Mammary epithelial cell (primary cell): ENCODE measurements at regions of chr11 and their contacts with region 1.

Region 1: DNA sequence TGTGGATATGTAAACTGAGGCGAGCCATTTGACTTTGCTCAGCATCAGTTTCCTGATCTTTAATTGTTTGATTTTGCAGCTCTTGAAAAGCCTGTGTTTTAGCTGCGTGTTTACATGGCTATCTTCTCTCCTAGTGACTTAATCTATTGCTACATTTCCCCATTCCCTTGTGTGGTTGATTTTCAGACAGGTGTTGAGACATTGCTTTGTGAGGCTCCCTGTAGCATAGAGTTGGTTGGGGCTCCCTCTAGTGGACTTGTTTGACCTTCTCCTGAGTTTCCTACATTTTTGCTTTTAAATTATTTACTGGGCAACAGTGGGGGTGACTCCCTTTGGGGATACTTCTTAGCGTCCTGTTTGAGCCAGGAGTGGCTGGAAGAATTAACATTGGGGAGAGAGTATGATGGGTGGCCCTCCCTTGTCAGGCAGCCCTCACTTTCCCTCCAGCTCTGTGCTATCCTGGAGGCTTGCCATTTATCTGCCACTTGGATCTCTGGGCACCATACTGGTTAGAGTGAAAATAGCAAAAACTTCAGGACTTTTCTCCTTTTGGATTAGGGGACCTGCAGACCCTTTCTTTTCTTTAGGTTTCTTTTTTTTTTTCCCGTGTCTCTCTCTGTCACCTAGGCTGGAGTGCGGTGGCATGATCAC is 9.2 kb upstream of the CBL start:
- DNase-seq: peak; percentile 80
- H3K4me3 ChIP-seq: no peak overlapping the region
- H3K27ac ChIP-seq: no peak overlapping the region
- H3K4me1 ChIP-seq: no peaks in the 10 kb centered on the region
- H3K27me3 ChIP-seq: no peaks in the 10 kb centered on the region
- CTCF ChIP-seq: peak; percentile 72 to 74

Region 2: GRCh38 chr11:119065369-119065768 is 131.6 kb before region 1 on chr11:
- CTCF ChIA-PET with region 1: interaction called, 3 read pairs
- dilution Hi-C with region 1: no loop called
- in situ Hi-C with region 1: no loop called
- intact Hi-C with region 1: loop called (anchors 1 kb)
- DNase-seq: no peak
- H3K4me3 ChIP-seq: no peak overlapping the region
- H3K27ac ChIP-seq: no peak overlapping the region
- H3K4me1 ChIP-seq: peaks cover 10% of the 10 kb centered on the region
- H3K27me3 ChIP-seq: no peaks in the 10 kb centered on the region
- CTCF ChIP-seq: peak; percentile 56 to 61

Region 3: DNA sequence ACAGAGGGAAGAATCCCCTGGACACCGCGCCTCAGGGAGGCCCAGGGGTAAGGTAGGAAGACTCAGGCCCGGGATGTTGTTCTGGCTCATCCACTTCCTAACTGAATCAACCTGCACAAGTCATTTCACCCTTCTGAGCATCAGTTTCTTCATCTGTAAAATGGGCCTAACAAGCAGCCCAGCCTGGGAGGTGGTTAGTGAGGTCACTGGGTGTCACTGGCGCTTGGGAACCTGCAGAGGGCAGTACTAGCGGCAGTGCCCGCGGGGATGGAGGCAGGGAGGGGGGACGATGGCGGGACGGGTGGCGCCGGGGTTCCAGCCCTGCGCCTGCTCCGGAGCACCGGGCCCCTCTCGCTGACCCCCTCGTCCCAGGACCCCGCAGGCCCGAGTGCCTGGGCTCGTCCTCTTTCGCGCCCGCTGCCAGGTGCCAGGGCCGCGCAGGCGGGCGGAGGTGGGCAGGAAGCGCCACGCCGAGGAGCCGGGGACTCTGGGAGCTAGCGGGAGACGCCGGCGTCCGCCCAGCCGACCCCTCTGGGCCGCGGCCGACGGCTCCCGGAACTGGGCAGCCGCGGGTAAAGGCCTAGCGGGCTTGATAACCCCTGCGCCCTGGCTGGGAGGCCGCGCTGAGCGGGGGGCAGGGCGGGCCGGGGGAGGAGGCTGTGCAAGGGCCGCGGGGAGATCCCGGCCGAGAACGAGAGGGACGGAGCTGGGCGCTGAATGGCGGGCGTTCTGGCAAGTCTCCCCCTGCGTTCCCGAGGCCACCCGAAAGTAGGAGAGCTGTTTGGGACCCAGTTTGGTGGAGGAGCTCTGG is 28.3 kb before region 1 on chr11 and contains the start of gene NLRX1:
- CTCF ChIA-PET with region 1: interaction called, 3 read pairs
- dilution Hi-C with region 1: no loop called
- in situ Hi-C with region 1: no loop called
- intact Hi-C with region 1: loop called (anchors 1 kb)
- DNase-seq: peak; percentile 66
- H3K4me3 ChIP-seq: peak within 1 kb of the TSS; percentile 59 to 68 (median 66)
- H3K27ac ChIP-seq: peak within 1 kb of the TSS; percentile 84
- H3K4me1 ChIP-seq: peaks cover 35% of the 10 kb centered on the region
- H3K27me3 ChIP-seq: no peaks in the 10 kb centered on the region
- CTCF ChIP-seq: peak; percentile 83 to 93
- total RNA-seq, gene NLRX1: 13.5 to 15.5 TPM

Region 4: DNA sequence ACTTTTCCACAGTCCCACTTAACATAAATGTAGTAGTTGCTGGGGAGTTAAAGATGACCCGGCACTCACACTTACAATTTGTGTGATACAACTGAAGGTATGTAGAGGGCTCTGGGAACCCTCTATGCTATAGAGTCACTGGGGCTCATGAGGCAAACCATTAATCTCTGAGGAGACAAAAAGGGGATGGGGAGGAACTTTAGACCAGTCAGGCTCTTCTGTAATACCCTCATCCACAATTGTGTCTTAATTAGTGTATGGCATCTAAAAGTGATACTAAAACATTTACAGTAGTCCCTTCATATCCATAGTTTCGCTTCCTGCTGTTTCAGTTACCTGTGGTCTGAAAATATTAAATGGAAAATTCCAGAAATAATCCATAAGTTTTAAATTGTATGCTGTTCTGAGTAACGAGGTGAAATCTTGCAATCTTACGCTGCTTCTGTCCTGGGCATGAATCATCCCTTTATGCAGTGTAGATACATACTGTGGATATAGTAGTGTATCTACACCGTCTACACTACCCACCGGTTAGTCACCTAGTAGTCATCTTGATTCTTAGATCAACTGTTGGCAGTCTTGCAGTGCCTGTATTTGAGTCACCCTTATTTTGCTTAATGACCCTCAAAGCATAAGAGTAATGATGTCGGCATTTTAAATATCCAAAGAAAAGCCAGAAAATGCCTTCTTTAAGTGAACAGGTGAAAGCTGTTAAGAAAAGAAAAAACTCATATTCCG is 21.4 kb after region 1 on chr11:
- CTCF ChIA-PET with region 1: no interaction called
- dilution Hi-C with region 1: no loop called
- in situ Hi-C with region 1: no loop called
- intact Hi-C with region 1: no loop called
- DNase-seq: peak; percentile 96
- H3K4me3 ChIP-seq: no peak overlapping the region
- H3K27ac ChIP-seq: peak overlapping the region; percentile 76
- H3K4me1 ChIP-seq: peaks cover 19% of the 10 kb centered on the region
- H3K27me3 ChIP-seq: no peaks in the 10 kb centered on the region
- CTCF ChIP-seq: no peak

Region 5: GRCh38 chr11:119509969-119510401 is 313.0 kb after region 1 on chr11:
- CTCF ChIA-PET with region 1: no interaction called
- dilution Hi-C with region 1: no loop called
- in situ Hi-C with region 1: no loop called
- intact Hi-C with region 1: no loop called
- DNase-seq: peak; percentile 94
- H3K4me3 ChIP-seq: no peak overlapping the region
- H3K27ac ChIP-seq: no peak overlapping the region
- H3K4me1 ChIP-seq: no peaks in the 10 kb centered on the region
- H3K27me3 ChIP-seq: no peaks in the 10 kb centered on the region
- CTCF ChIP-seq: no peak